IMR-90 (cell line): ENCODE measurements at regions of chr10 and their contacts with region 1.

Region 1: DNA sequence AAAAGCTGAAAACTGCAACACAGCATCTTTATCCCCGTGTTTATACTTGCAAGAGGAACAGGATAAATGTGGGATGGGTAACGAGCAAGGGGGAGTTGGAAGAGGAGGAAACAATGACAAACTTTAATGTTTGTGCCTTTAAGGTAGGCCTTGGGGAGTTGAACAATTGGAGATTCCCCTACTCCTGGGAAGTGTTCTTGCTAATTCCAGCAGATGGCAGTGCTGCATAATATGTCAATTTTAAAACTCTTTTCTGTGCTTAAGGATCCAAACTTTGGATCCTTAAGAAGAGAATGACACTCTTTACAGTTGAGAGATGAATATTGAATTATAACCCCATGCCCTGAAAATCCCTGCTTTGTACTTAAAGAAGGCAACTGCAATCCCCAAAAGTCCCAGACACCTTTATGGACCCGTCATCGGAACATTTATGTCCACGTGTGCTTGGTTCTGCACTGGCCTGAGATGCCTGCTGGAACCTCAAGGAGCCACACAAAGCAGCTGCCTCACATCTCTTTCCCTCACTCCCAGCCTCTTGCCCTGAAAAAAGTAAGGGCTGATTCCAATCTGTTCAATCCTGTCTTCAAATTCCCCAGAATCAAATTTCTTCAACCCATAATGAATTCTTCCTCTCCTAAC is 12.0 kb downstream of the IFIT5 start:
- DNase-seq: peak; percentile 75
- ATAC-seq: peak; percentile 77
- H3K4me3 ChIP-seq: no peak overlapping the region
- H3K27ac ChIP-seq: no peak overlapping the region
- H3K4me1 ChIP-seq: peaks cover 15% of the 10 kb centered on the region
- H3K27me3 ChIP-seq: no peaks in the 10 kb centered on the region
- CTCF ChIP-seq: peak; percentile 89
- POLR2A ChIP-seq: no peak
- RAD21 ChIP-seq: peak; percentile 92

Region 2: DNA sequence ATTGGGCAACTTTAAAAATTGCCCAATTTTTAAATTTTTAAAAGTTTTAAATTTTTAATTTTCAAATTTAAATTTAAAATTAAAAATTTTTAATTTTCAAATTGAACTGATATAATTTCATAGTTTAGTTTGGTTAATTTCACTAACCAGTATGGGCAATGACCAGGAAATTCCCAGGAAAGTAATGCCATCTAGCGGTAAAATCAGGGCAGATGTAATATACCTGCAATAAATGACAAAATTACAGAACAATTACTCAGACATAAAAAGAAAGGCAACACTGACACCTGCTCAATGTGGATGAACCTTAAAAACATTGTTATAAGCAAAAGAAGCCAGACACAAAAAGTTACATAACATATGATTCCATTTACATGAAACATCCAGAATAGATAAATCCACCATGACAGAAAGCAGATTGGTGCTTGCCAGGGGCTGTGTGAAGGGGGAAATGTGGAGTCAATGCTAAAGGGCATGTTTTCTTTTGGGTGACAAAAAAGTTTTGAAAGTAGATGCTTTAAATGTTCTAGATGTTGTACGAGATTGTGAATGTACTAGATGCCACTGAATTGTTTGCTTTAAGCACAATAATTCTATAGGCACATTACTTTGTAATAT is 137.6 kb after region 1 on chr10:
- CTCF ChIA-PET with region 1: interaction called, 3 read pairs
- POLR2A ChIA-PET with region 1: no interaction called
- dilution Hi-C with region 1: no loop called
- in situ Hi-C with region 1: loop called (anchors 5 kb)
- intact Hi-C with region 1: loop called (anchors 1 kb)
- DNase-seq: peak; percentile 60
- ATAC-seq: peak; percentile 75
- H3K4me3 ChIP-seq: no peak overlapping the region
- H3K27ac ChIP-seq: no peak overlapping the region
- H3K4me1 ChIP-seq: no peaks in the 10 kb centered on the region; the same call in 1 of the 2 replicates
- H3K27me3 ChIP-seq: no peaks in the 10 kb centered on the region
- CTCF ChIP-seq: peak; percentile 85
- POLR2A ChIP-seq: no peak; the same call in 1 of the 2 replicates
- RAD21 ChIP-seq: peak; percentile 95

Region 3: GRCh38 chr10:89701238-89702120 is 275.1 kb after region 1 on chr10 and contains the start of gene KIF20B:
- CTCF ChIA-PET with region 1: no interaction called
- POLR2A ChIA-PET with region 1: no interaction called
- dilution Hi-C with region 1: no loop called
- in situ Hi-C with region 1: no loop called
- intact Hi-C with region 1: loop called (anchors 2 kb)
- DNase-seq: peak; percentile 95
- ATAC-seq: peak; percentile 100
- H3K4me3 ChIP-seq: peak within 1 kb of the TSS; percentile 77
- H3K27ac ChIP-seq: peak within 1 kb of the TSS; percentile 90
- H3K4me1 ChIP-seq: peaks cover 2% of the 10 kb centered on the region; the same call in 1 of the 2 replicates
- H3K27me3 ChIP-seq: no peaks in the 10 kb centered on the region
- CTCF ChIP-seq: peak; percentile 54
- POLR2A ChIP-seq: peak; percentile 60; the same call in 1 of the 2 replicates
- RAD21 ChIP-seq: peak; percentile 56
- total RNA-seq, gene KIF20B: 16.1 and 23.5 TPM in 2 replicates

Region 4: DNA sequence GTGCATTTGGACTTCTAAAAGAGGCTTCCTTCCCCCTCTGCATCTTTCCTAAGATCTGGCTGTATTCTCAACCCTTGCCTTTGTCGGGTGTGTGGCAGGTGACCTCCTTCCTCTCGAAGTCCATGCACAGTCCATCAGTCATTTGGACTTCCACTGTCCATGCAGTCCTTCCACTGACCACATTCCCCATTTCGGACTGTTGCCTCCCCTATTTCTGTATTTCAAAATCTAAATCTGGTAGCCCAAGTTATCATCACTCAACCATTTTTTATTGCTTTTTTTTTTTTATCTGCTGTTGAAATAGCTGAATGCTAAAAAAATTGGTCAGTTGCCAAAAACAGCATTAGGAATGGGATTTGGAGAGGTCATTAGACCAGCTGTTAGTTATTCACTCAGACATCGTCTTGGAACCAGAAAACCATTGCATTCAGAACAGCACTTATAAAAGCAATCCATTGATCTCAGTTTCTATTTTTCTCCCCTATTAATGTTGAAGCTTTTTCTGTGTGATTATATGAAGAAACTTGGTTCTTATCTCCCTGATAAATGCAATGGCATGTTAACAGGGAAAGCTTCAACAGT is 850.6 kb after region 1 on chr10:
- CTCF ChIA-PET with region 1: no interaction called
- POLR2A ChIA-PET with region 1: no interaction called
- dilution Hi-C with region 1: no loop called
- in situ Hi-C with region 1: no loop called
- intact Hi-C with region 1: loop called (anchors 10 kb)
- DNase-seq: no peak
- ATAC-seq: no peak
- H3K4me3 ChIP-seq: no peak overlapping the region
- H3K27ac ChIP-seq: no peak overlapping the region
- H3K4me1 ChIP-seq: no peaks in the 10 kb centered on the region
- H3K27me3 ChIP-seq: peaks cover 3% of the 10 kb centered on the region
- CTCF ChIP-seq: no peak
- POLR2A ChIP-seq: no peak
- RAD21 ChIP-seq: no peak

Region 5: DNA sequence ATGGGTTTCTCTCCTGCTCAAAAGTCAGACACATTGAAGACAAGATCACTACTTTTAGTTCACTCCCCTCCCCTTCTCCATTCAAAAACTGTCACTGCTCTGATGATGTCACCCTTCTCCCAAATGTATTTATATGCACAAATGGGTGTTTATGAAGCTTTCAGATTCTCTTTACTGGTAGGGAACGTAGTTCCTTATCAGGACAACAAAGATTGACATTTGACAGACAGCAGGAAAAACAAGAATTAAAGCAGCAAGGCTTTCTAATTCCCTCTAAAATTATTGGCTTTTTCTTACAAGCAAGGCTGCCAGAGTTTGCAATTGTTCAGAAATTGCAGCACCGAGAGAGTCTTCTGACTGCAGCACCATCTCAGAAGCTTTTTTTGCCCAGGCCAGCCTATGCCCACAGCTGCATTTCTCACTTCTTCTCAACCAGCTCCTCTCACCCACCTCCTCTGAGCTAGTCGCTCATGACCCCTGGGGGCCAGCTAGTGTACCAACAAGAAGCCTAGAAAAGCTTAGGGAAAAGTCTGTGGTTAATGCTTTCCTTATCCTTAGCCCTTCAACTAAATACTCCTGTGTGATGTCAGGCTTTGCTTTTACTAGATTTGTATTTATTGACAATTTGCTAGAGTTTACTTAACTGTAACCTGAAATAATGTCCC is 1166.4 kb after region 1 on chr10:
- CTCF ChIA-PET with region 1: no interaction called
- POLR2A ChIA-PET with region 1: no interaction called
- dilution Hi-C with region 1: no loop called
- in situ Hi-C with region 1: loop called (anchors 10 kb)
- intact Hi-C with region 1: loop called (anchors 10 kb)
- DNase-seq: peak; percentile 51
- ATAC-seq: peak; percentile 93
- H3K4me3 ChIP-seq: no peak overlapping the region
- H3K27ac ChIP-seq: no peak overlapping the region
- H3K4me1 ChIP-seq: no peaks in the 10 kb centered on the region
- H3K27me3 ChIP-seq: peaks cover 10% of the 10 kb centered on the region
- CTCF ChIP-seq: peak; percentile 64
- POLR2A ChIP-seq: no peak
- RAD21 ChIP-seq: peak; percentile 80

Region 6: GRCh38 chr10:90871766-90872647 is 1445.7 kb after region 1 on chr10 and contains the start of gene RPP30:
- CTCF ChIA-PET with region 1: no interaction called
- POLR2A ChIA-PET with region 1: no interaction called
- dilution Hi-C with region 1: no loop called
- in situ Hi-C with region 1: loop called (anchors 25 kb)
- intact Hi-C with region 1: loop called (anchors 10 kb)
- DNase-seq: peak; percentile 74
- ATAC-seq: peak; percentile 99
- H3K4me3 ChIP-seq: peak within 1 kb of the TSS; percentile 89
- H3K27ac ChIP-seq: peak within 1 kb of the TSS; percentile 77
- H3K4me1 ChIP-seq: peaks cover 2% of the 10 kb centered on the region; the same call in 1 of the 2 replicates
- H3K27me3 ChIP-seq: peaks cover 13% of the 10 kb centered on the region
- CTCF ChIP-seq: no peak
- POLR2A ChIP-seq: no peak
- RAD21 ChIP-seq: no peak
- total RNA-seq, gene RPP30: 45.2 and 45.8 TPM in 2 replicates